ENCODE measurements at regions of chr12 and their contacts with region 1.

Region 1: DNA sequence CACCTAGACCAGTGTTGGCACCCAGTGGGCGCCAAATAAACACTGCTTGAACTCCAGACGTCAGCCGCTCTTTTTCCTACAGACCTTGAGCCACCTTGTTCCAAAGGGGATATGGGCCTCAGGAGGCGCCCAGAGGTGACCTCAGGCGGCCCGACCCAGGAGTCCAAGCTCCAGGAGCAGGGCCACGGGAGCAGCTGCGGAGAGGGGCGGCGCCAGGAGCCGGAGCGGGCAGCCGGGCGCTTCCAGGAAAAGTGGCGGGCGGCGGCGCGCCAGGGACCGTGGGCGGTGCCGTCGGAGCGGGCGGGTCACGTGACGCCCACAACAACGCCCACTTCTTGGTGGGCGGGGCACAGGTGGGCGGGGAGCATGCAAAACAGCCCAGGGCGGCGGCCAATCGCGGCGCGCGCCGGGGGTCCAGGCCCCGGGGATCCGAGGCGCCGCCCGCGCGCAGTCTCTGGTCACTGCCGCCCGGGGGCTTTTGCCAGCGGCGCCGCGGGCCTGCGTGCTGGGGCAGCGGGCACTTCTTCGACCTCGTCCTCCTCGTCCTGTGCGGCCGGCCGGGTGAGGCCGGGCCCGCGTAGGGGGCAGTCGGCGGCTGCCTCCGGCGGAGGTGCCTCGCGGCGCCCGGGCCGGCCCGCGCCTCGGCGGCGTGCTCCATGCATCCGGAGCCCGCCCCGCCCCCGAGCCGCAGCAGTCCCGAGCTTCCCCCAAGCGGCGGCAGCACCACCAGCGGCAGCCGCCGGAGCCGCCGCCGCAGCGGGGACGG is at the start of gene ORAI1:
- DNase-seq: peak; percentile 96
- H3K4me3 Mint-ChIP-seq: peak within 1 kb of the TSS; percentile 97
- H3K27ac Mint-ChIP-seq: peak within 1 kb of the TSS; percentile 96
- H3K4me1 Mint-ChIP-seq: peaks cover 45% of the 10 kb centered on the region
- H3K27me3 Mint-ChIP-seq: no peaks in the 10 kb centered on the region

Region 2: GRCh38 chr12:121579981-121580868 is 46.0 kb before region 1 on chr12:
- CTCF ChIA-PET with region 1: interaction called, 11 read pairs
- DNase-seq: peak; percentile 89
- H3K4me3 Mint-ChIP-seq: peak overlapping the region; percentile 84
- H3K27ac Mint-ChIP-seq: peak overlapping the region; percentile 100
- H3K4me1 Mint-ChIP-seq: peaks cover 60% of the 10 kb centered on the region
- H3K27me3 Mint-ChIP-seq: no peaks in the 10 kb centered on the region

Region 3: GRCh38 chr12:121637231-121637914 is 11.1 kb after region 1 on chr12:
- CTCF ChIA-PET with region 1: interaction called, 19 read pairs
- DNase-seq: peak; percentile 77
- H3K4me3 Mint-ChIP-seq: peak overlapping the region; percentile 50
- H3K27ac Mint-ChIP-seq: peak overlapping the region; percentile 90
- H3K4me1 Mint-ChIP-seq: peaks cover 76% of the 10 kb centered on the region
- H3K27me3 Mint-ChIP-seq: no peaks in the 10 kb centered on the region